ENCODE measurements at regions of chr15 and their contacts with region 1.

Region 1: GRCh38 chr15:85330901-85331588 is 49.4 kb upstream of the AKAP13 start:
- DNase-seq: peak; percentile 82
- ATAC-seq: peak; percentile 96
- H3K4me3 Mint-ChIP-seq: 0 out of 2 replicates have a peak overlapping the region, but pooled peaks have one; percentile 10
- H3K27ac Mint-ChIP-seq: no peak overlapping the region
- H3K4me1 Mint-ChIP-seq: peaks cover 32% of the 10 kb centered on the region
- H3K27me3 Mint-ChIP-seq: peaks cover 14% of the 10 kb centered on the region
- CTCF ChIP-seq: no peak

Region 2: GRCh38 chr15:85296615-85297402 is 34.2 kb before region 1 on chr15:
- CTCF ChIA-PET with region 1: interaction called, 19 read pairs
- POLR2A ChIA-PET with region 1: no interaction called
- DNase-seq: peak; percentile 43
- ATAC-seq: peak; percentile 95
- H3K4me3 Mint-ChIP-seq: no peak overlapping the region
- H3K27ac Mint-ChIP-seq: peak overlapping the region; percentile 7; the same call in 1 of the 2 replicates
- H3K4me1 Mint-ChIP-seq: peaks cover 11% of the 10 kb centered on the region
- H3K27me3 Mint-ChIP-seq: 0 out of 2 replicates have a peak, but pooled peaks cover 2% of the 10 kb centered on the region
- CTCF ChIP-seq: peak; percentile 35; the same call in 1 of the 2 replicates

Region 3: GRCh38 chr15:85312486-85312885 is 18.6 kb before region 1 on chr15:
- CTCF ChIA-PET with region 1: interaction called, 13 read pairs
- POLR2A ChIA-PET with region 1: no interaction called
- DNase-seq: no peak
- ATAC-seq: peak; percentile 24
- H3K4me3 Mint-ChIP-seq: no peak overlapping the region
- H3K27ac Mint-ChIP-seq: no peak overlapping the region
- H3K4me1 Mint-ChIP-seq: peaks cover 11% of the 10 kb centered on the region
- H3K27me3 Mint-ChIP-seq: 0 out of 2 replicates have a peak, but pooled peaks cover 2% of the 10 kb centered on the region
- CTCF ChIP-seq: no peak

Region 4: GRCh38 chr15:85412956-85413854 is 82.2 kb after region 1 on chr15:
- CTCF ChIA-PET with region 1: interaction called, 12 read pairs
- POLR2A ChIA-PET with region 1: no interaction called
- DNase-seq: no peak
- ATAC-seq: peak; percentile 73
- H3K4me3 Mint-ChIP-seq: no peak overlapping the region
- H3K27ac Mint-ChIP-seq: peak overlapping the region; percentile 64; the same call in 1 of the 2 replicates
- H3K4me1 Mint-ChIP-seq: peaks cover 30% of the 10 kb centered on the region
- H3K27me3 Mint-ChIP-seq: no peaks in the 10 kb centered on the region
- CTCF ChIP-seq: no peak

Region 5: GRCh38 chr15:85477730-85478129 is 146.7 kb after region 1 on chr15:
- CTCF ChIA-PET with region 1: interaction called, 10 read pairs
- POLR2A ChIA-PET with region 1: no interaction called
- DNase-seq: no peak
- ATAC-seq: no peak
- H3K4me3 Mint-ChIP-seq: no peak overlapping the region
- H3K27ac Mint-ChIP-seq: peak overlapping the region; percentile 11
- H3K4me1 Mint-ChIP-seq: peaks cover 66% of the 10 kb centered on the region
- H3K27me3 Mint-ChIP-seq: no peaks in the 10 kb centered on the region
- CTCF ChIP-seq: no peak

Region 6: DNA sequence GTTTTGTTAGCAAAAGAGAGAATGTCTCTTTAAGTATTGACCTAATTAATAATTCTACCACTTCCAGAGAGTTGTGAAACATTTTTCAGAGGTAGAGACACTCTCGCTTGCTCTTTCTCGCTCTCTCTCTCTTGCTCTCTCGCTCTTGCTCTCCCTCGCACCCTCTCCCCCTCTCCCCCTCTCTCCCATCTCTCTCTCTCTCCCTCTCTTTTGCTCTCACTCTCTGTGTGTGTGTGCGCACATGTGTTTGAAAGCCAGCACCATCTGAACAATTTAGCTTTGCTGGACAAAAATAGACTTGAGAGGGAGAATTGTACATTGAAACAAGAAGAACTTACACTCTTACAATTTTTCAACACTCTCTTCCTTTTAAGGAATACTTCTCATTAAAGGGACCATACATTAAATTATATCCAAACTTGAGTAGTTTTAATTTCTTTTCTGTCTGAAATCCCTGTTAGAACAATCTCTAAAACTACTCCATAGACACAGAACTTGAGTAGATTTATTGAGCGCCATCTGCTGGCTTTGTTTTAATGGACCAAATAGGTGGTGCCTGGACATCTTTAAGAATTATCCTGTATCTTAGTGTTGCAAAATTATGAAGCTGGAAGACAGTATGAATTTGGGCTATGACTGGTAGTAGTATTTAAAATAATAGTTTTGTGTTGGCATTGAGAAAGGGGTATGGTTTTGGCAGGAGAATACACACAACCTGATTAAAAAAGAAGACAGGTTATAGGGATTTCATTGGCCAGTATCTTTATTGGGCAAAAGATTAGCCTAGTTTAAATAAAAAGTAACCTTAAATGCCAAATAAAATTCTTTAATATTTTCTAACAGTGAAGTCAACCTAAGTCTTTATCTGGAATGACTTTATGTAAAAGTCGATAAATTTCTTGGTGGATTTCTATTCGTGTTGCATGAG is 174.0 kb after region 1 on chr15:
- CTCF ChIA-PET with region 1: interaction called, 13 read pairs
- POLR2A ChIA-PET with region 1: no interaction called
- DNase-seq: no peak
- ATAC-seq: peak; percentile 49
- H3K4me3 Mint-ChIP-seq: no peak overlapping the region
- H3K27ac Mint-ChIP-seq: no peak overlapping the region
- H3K4me1 Mint-ChIP-seq: peaks cover 28% of the 10 kb centered on the region
- H3K27me3 Mint-ChIP-seq: no peaks in the 10 kb centered on the region
- CTCF ChIP-seq: peak; percentile 32; the same call in 1 of the 2 replicates

Region 7: DNA sequence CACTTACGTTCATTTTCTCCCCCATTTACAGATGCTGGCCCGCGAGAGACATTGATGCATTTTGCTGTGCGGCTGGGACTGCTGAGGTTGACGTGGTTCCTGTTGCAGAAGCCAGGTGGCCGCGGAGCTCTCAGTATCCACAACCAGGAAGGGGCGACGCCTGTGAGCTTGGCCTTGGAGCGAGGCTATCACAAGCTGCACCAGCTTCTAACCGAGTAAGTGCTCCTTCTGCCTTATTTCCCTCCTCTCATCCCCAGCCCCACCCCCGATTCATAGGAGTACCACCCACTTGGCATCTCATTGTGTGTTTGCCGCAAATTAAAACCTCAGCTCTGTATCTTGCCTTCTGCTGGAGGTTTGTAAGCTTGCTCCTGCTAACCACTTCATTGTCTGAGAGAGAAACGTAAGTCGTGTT is 212.7 kb after region 1 on chr15:
- CTCF ChIA-PET with region 1: interaction called, 11 read pairs
- POLR2A ChIA-PET with region 1: no interaction called
- DNase-seq: peak; percentile 52
- ATAC-seq: peak; percentile 97
- H3K4me3 Mint-ChIP-seq: no peak overlapping the region
- H3K27ac Mint-ChIP-seq: peak overlapping the region; percentile 15
- H3K4me1 Mint-ChIP-seq: peaks cover 22% of the 10 kb centered on the region
- H3K27me3 Mint-ChIP-seq: no peaks in the 10 kb centered on the region
- CTCF ChIP-seq: no peak